ENCODE measurements at regions of chr5 and their contacts with region 1.

Region 1: GRCh38 chr5:95840956-95841705 is 18.6 kb upstream of the GLRX start:
- DNase-seq: no peak
- ATAC-seq: no peak
- H3K4me3 ChIP-seq: no peak overlapping the region
- H3K4me3 Mint-ChIP-seq: no peak overlapping the region
- H3K27ac ChIP-seq: no peak overlapping the region
- H3K27ac Mint-ChIP-seq: no peak overlapping the region
- H3K4me1 ChIP-seq: peaks cover 19% of the 10 kb centered on the region
- H3K4me1 Mint-ChIP-seq: peaks cover 28% of the 10 kb centered on the region
- H3K27me3 ChIP-seq: no peaks in the 10 kb centered on the region
- H3K27me3 Mint-ChIP-seq: no peaks in the 10 kb centered on the region
- CTCF ChIP-seq: no peak

Region 2: DNA sequence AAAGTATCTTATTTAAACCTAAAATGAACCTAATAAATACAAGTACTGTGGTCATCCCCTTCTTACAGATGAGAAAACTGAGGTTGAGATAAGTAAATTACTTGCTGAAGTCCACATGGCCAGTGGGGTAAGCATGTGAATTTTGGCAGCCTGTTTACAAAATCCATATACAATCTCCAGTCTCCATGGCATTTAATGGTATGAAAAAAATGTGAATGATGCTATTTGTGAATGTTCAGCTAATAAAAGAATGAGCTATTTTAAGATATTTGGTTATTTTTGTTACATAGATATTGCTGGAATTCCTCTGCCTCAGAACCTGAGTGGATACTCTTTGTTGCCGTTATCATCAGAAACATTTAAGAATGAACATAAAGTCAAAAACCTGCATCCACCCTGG is 240.6 kb before region 1 on chr5:
- CTCF ChIA-PET with region 1: no interaction called
- POLR2A ChIA-PET with region 1: no interaction called
- intact Hi-C with region 1: no loop called
- DNase-seq: no peak
- ATAC-seq: no peak
- H3K4me3 ChIP-seq: no peak overlapping the region
- H3K4me3 Mint-ChIP-seq: no peak overlapping the region
- H3K27ac ChIP-seq: no peak overlapping the region
- H3K27ac Mint-ChIP-seq: no peak overlapping the region
- H3K4me1 ChIP-seq: no peaks in the 10 kb centered on the region
- H3K4me1 Mint-ChIP-seq: no peaks in the 10 kb centered on the region
- H3K27me3 ChIP-seq: no peaks in the 10 kb centered on the region
- H3K27me3 Mint-ChIP-seq: no peaks in the 10 kb centered on the region
- CTCF ChIP-seq: no peak

Region 3: GRCh38 chr5:95870105-95870672 is 29.1 kb after region 1 on chr5:
- CTCF ChIA-PET with region 1: no interaction called
- POLR2A ChIA-PET with region 1: interaction called, 14 read pairs
- intact Hi-C with region 1: no loop called
- DNase-seq: peak in 1 of 9 experiments; percentile 35
- ATAC-seq: peak; percentile 33
- H3K4me3 ChIP-seq: no peak overlapping the region
- H3K4me3 Mint-ChIP-seq: peak overlapping the region; percentile 53
- H3K27ac ChIP-seq: no peak overlapping the region
- H3K27ac Mint-ChIP-seq: no peak overlapping the region
- H3K4me1 ChIP-seq: peaks cover 32% of the 10 kb centered on the region
- H3K4me1 Mint-ChIP-seq: peaks cover 31% of the 10 kb centered on the region
- H3K27me3 ChIP-seq: no peaks in the 10 kb centered on the region
- H3K27me3 Mint-ChIP-seq: no peaks in the 10 kb centered on the region
- CTCF ChIP-seq: no peak

Region 4: GRCh38 chr5:96067894-96068614 is 226.9 kb after region 1 on chr5:
- CTCF ChIA-PET with region 1: no interaction called
- POLR2A ChIA-PET with region 1: no interaction called
- intact Hi-C with region 1: no loop called
- DNase-seq: no peak
- ATAC-seq: no peak
- H3K4me3 ChIP-seq: no peak overlapping the region
- H3K4me3 Mint-ChIP-seq: no peak overlapping the region
- H3K27ac ChIP-seq: no peak overlapping the region
- H3K27ac Mint-ChIP-seq: no peak overlapping the region
- H3K4me1 ChIP-seq: no peaks in the 10 kb centered on the region
- H3K4me1 Mint-ChIP-seq: no peaks in the 10 kb centered on the region
- H3K27me3 ChIP-seq: no peaks in the 10 kb centered on the region
- H3K27me3 Mint-ChIP-seq: no peaks in the 10 kb centered on the region
- CTCF ChIP-seq: no peak

Measured in CD8-positive, alpha-beta T cell (primary cell).